Aorta (tissue), 5 donors: ENCODE measurements at regions of chr1 and their contacts with region 1.

Region 1: DNA sequence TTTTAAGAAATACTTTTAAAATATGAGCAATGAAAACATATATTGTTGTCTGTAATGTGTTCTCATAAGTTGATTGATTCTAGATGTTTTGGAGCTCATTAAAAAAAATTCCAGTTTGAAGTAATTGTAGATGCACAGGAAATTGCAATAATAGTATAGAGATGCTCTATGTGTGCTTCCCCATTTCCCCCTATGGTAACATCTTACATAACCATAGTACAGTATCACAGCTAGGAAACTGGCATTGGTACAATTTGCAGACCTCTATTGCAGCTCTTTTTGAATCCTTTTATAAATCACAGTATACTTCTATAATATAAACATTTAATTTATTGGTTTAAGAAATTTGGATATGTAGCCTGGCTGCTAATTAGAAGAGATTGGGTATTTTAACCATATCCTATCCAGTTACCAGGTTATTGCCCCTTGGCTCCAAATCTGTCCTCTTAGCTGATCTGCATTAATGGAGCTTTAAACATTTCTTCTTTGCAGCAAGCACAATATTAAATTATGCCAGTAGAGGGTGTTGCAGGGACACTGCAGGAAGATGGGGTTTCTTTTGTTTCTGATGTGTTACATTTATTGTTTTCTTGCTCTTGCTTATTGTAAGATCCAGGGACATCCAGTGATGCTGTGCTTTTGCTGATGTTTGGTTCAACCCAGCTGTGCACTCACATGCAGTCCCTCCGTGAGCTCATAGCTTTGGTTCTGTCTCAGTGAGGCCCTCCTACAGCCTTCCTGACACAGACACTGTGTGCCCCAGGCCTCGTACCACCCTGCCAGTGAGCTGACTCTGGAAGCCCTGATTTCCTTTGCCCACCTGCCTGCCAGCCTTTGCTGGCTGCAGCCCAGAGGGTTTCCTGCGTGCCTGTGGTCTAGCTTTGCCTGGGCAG is 103.3 kb downstream of the RABGAP1L start:
- DNase-seq: no peak
- ATAC-seq: peak; percentile 57
- H3K4me3 ChIP-seq: no peak overlapping the region
- H3K27ac ChIP-seq: no peak overlapping the region
- H3K4me1 ChIP-seq: no peaks in the 10 kb centered on the region
- H3K27me3 ChIP-seq: no peaks in the 10 kb centered on the region

Region 2: DNA sequence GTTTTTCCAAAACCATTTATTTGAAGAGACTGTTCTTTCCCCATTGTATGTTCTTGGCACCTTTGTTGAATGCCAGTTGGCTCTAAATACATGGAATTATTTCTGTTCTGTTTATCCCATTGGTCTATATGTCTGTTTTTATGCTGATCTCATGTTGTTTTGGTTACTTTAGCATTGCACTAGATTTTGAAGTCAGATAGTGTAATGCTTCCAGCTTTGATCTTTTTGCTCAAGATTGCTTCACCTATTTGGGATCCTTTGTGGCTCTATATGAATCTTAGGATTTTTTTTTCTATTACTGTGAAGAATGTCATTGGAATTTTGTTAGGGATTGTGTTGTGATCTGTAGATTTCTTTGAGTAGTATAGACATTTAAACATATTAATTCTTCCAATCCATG is 46.0 kb after region 1 on chr1:
- intact Hi-C with region 1: no loop called
- DNase-seq: no peak
- ATAC-seq: no peak
- H3K4me3 ChIP-seq: no peak overlapping the region
- H3K27ac ChIP-seq: no peak overlapping the region
- H3K4me1 ChIP-seq: no peaks in the 10 kb centered on the region
- H3K27me3 ChIP-seq: no peaks in the 10 kb centered on the region

Region 3: DNA sequence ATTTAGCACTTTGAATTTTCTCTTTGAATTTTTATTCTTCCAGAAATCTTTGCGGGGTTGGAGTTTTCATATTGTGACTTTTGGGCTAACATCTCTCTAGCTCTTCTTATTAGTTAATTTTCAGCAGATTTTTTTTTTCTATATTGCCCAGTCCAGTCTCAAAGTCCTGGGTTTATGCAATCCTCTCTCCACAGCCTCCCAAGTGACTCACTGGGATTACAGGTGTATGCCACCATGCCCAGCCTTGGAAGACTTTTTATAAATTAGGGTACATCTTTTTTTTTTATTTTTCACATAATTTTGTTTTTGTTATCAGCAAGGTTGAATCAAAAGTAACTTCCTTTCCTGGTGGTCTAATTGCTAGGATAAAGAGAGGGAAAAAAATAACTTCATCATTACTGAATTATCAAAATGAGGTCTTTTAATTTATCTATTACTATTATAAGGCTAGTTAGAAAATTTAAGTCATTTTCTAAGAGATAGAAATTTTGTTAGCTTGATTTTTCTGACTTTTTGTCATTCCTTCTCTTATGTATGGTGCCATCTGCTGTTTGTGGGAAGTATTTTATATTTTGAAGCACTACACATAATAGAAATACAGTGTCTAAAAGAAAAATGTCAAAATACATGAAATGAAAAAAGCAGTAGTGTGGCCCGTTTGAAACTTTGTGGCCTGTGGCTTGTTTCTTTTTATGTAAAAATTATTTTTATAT is 463.7 kb after region 1 on chr1:
- intact Hi-C with region 1: loop called in 1 of 2 experiments (anchors 5 kb)
- DNase-seq: no peak
- ATAC-seq: no peak
- H3K4me3 ChIP-seq: no peak overlapping the region
- H3K27ac ChIP-seq: no peak overlapping the region
- H3K4me1 ChIP-seq: no peaks in the 10 kb centered on the region
- H3K27me3 ChIP-seq: no peaks in the 10 kb centered on the region

Region 4: GRCh38 chr1:174743654-174744561 is 481.3 kb after region 1 on chr1:
- intact Hi-C with region 1: loop called (anchors 5 kb)
- DNase-seq: no peak
- ATAC-seq: peak; percentile 41
- H3K4me3 ChIP-seq: no peak overlapping the region
- H3K27ac ChIP-seq: no peak overlapping the region
- H3K4me1 ChIP-seq: no peaks in the 10 kb centered on the region
- H3K27me3 ChIP-seq: no peaks in the 10 kb centered on the region